MCF 10A (cell line): ENCODE measurements at regions of chr12 and their contacts with region 1.

Region 1: GRCh38 chr12:89384050-89384758 is 31.9 kb upstream of the DUSP6 start:
- DNase-seq: peak; percentile 90
- H3K4me3 Mint-ChIP-seq: peak overlapping the region; percentile 59
- H3K27ac Mint-ChIP-seq: peak overlapping the region; percentile 53
- H3K4me1 Mint-ChIP-seq: peaks cover 25% of the 10 kb centered on the region
- H3K27me3 Mint-ChIP-seq: no peaks in the 10 kb centered on the region
- CTCF ChIP-seq: no peak

Region 2: GRCh38 chr12:89373763-89374572 is 10.2 kb before region 1 on chr12:
- CTCF ChIA-PET with region 1: no interaction called
- POLR2A ChIA-PET with region 1: interaction called, 10 read pairs
- intact Hi-C with region 1: no loop called
- DNase-seq: peak; percentile 83
- H3K4me3 Mint-ChIP-seq: no peak overlapping the region
- H3K27ac Mint-ChIP-seq: peak overlapping the region; percentile 49
- H3K4me1 Mint-ChIP-seq: peaks cover 53% of the 10 kb centered on the region
- H3K27me3 Mint-ChIP-seq: no peaks in the 10 kb centered on the region
- CTCF ChIP-seq: no peak

Region 3: DNA sequence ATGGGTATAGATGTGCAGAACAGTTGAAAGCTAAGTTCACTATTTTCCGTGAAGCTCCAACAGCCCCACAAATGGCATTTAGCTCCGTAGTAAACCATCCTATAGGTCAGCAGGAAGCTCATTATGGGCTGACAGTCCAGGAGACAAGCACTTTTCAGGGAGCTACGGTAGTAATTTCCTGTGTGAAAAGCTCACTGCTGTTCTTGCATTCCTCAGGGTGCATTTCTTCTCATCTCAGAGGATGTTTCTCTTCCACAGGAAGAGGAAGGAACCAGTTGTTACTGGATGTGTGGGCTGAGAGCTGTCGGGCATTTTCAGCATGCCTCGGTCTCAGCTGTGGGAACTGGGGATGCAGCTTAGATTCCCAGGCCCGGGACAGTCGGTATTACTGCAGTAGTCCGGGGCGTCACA is 67.6 kb after region 1 on chr12:
- CTCF ChIA-PET with region 1: no interaction called
- POLR2A ChIA-PET with region 1: no interaction called
- intact Hi-C with region 1: loop called (anchors 2 kb)
- DNase-seq: peak; percentile 21
- H3K4me3 Mint-ChIP-seq: peak overlapping the region; percentile 44
- H3K27ac Mint-ChIP-seq: peak overlapping the region; percentile 16
- H3K4me1 Mint-ChIP-seq: peaks cover 10% of the 10 kb centered on the region
- H3K27me3 Mint-ChIP-seq: no peaks in the 10 kb centered on the region
- CTCF ChIP-seq: no peak